PC-3 (cell line): ENCODE measurements at regions of chr4 and their contacts with region 1.

Region 1: DNA sequence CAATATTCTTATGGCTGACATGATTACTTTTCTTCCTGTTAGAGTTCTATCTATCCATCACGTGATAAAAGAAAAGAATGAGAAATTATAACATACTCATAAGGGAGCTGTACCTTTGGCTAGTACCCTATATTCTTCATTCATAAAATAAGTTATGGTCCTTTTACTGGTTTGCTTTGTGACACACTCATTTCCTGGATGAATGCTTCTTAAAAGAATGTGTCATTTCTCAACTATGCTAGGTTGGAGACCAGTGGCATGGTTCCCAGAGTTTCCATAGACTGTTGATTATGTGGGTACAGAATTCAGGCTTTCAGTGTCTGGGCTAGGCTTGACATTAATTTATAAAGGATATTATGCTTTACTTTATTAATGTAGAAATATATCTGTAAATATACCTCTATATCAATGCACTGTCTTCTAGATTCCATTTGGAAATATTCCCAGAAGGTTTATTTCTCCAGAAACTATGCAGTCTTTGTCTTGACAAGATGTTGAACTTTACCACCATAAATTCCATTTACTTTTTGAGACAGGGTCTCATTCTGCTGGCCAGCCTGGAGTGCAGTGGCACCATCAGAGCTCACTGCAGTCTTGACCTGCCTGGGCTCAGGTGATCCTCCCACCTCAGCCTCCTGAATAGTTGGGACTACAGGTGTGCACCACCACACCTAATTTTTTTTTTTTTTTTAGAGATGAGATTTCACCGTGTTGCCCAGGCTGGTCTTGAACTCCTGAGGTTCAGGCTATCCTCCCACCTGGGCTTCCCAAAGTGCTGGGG is 23.8 kb downstream of the NUDT6 start:
- DNase-seq: peak; percentile 94
- ATAC-seq: peak; percentile 90
- H3K4me3 ChIP-seq: no peak overlapping the region
- H3K27ac ChIP-seq: peak overlapping the region; percentile 88
- H3K4me1 ChIP-seq: peaks cover 41% of the 10 kb centered on the region
- H3K27me3 ChIP-seq: no peaks in the 10 kb centered on the region
- CTCF ChIP-seq: no peak

Region 2: DNA sequence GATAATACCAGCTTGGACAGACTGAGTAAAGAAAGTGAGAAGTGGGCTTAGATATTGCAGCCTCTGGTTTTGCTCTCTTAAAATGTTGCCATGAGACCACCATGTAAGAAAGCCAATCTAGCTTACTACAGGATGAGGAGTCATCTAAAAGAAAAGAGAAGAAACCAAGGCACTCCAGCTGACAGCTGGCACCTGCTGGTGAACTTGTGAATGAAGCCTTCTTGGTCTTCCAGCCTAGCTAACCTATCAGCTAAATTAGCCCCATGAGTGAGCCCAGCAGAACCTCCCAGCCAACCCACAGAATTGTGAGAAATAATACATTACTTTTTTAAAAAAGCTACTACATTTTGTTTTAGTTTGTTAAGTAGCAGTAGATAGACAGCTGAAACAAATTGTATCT is 1363.2 kb before region 1 on chr4:
- CTCF ChIA-PET with region 1: no interaction called
- POLR2A ChIA-PET with region 1: no interaction called
- intact Hi-C with region 1: no loop called
- DNase-seq: no peak
- ATAC-seq: no peak
- H3K4me3 ChIP-seq: no peak overlapping the region
- H3K27ac ChIP-seq: no peak overlapping the region
- H3K4me1 ChIP-seq: no peaks in the 10 kb centered on the region
- H3K27me3 ChIP-seq: peaks cover 16% of the 10 kb centered on the region
- CTCF ChIP-seq: no peak

Region 3: GRCh38 chr4:122700178-122700725 is 198.3 kb before region 1 on chr4:
- CTCF ChIA-PET with region 1: no interaction called
- POLR2A ChIA-PET with region 1: no interaction called
- intact Hi-C with region 1: no loop called
- DNase-seq: peak; percentile 63
- ATAC-seq: peak; percentile 71
- H3K4me3 ChIP-seq: no peak overlapping the region
- H3K27ac ChIP-seq: no peak overlapping the region
- H3K4me1 ChIP-seq: peaks cover 12% of the 10 kb centered on the region
- H3K27me3 ChIP-seq: no peaks in the 10 kb centered on the region
- CTCF ChIP-seq: no peak

Region 4: GRCh38 chr4:122758033-122758432 is 140.5 kb before region 1 on chr4:
- CTCF ChIA-PET with region 1: interaction called, 4 read pairs
- POLR2A ChIA-PET with region 1: no interaction called
- intact Hi-C with region 1: loop called (anchors 1 kb)
- DNase-seq: peak; percentile 61
- ATAC-seq: peak; percentile 90
- H3K4me3 ChIP-seq: no peak overlapping the region
- H3K27ac ChIP-seq: no peak overlapping the region
- H3K4me1 ChIP-seq: peaks cover 4% of the 10 kb centered on the region
- H3K27me3 ChIP-seq: no peaks in the 10 kb centered on the region
- CTCF ChIP-seq: peak; percentile 79

Region 5: GRCh38 chr4:122783301-122784215 is 115.0 kb before region 1 on chr4:
- CTCF ChIA-PET with region 1: no interaction called
- POLR2A ChIA-PET with region 1: no interaction called
- intact Hi-C with region 1: loop called (anchors 5 kb)
- DNase-seq: peak; percentile 95
- ATAC-seq: peak; percentile 98
- H3K4me3 ChIP-seq: peak overlapping the region; percentile 37; the same call in 1 of the 2 replicates
- H3K27ac ChIP-seq: peak overlapping the region; percentile 65
- H3K4me1 ChIP-seq: peaks cover 30% of the 10 kb centered on the region
- H3K27me3 ChIP-seq: no peaks in the 10 kb centered on the region
- CTCF ChIP-seq: no peak

Region 6: GRCh38 chr4:122914292-122914904 is 15.8 kb after region 1 on chr4:
- CTCF ChIA-PET with region 1: no interaction called
- POLR2A ChIA-PET with region 1: interaction called, 7 read pairs
- intact Hi-C with region 1: loop called (anchors 1 kb)
- DNase-seq: peak; percentile 58
- ATAC-seq: peak; percentile 78
- H3K4me3 ChIP-seq: no peak overlapping the region
- H3K27ac ChIP-seq: no peak overlapping the region
- H3K4me1 ChIP-seq: peaks cover 23% of the 10 kb centered on the region
- H3K27me3 ChIP-seq: no peaks in the 10 kb centered on the region
- CTCF ChIP-seq: peak; percentile 68

Region 7: GRCh38 chr4:122978109-122978508 is 79.5 kb after region 1 on chr4:
- CTCF ChIA-PET with region 1: no interaction called
- POLR2A ChIA-PET with region 1: no interaction called
- intact Hi-C with region 1: no loop called
- DNase-seq: no peak
- ATAC-seq: no peak
- H3K4me3 ChIP-seq: no peak overlapping the region
- H3K27ac ChIP-seq: no peak overlapping the region
- H3K4me1 ChIP-seq: no peaks in the 10 kb centered on the region
- H3K27me3 ChIP-seq: no peaks in the 10 kb centered on the region
- CTCF ChIP-seq: no peak

Region 8: GRCh38 chr4:123014038-123014437 is 115.5 kb after region 1 on chr4:
- CTCF ChIA-PET with region 1: no interaction called
- POLR2A ChIA-PET with region 1: no interaction called
- intact Hi-C with region 1: no loop called
- DNase-seq: no peak
- ATAC-seq: no peak
- H3K4me3 ChIP-seq: no peak overlapping the region
- H3K27ac ChIP-seq: no peak overlapping the region
- H3K4me1 ChIP-seq: peaks cover 11% of the 10 kb centered on the region
- H3K27me3 ChIP-seq: no peaks in the 10 kb centered on the region
- CTCF ChIP-seq: no peak